PC-9 (cell line): ENCODE measurements at regions of chr14 and their contacts with region 1.

Region 1: DNA sequence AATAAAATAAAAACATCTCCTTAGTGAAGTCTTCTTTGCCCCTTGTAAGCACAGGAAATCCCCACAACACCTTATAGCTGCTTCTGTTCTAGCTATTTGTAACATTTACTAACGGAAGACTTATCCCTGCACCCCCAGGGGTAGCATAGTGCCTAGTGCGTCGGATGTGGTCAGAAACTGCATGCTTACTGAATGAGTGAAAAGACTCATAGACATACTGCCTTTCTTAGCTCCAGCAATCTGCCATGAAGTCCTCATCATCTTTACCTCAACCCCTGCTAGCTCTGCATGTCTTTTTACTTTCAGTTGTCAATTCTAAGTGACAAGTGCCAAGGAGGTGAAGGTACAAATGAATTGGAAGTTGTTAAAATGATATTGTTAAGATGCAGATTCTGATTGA is 12.9 kb downstream of the RIOX1 start:
- DNase-seq: no peak
- H3K4me3 ChIP-seq: no peak overlapping the region
- H3K27ac ChIP-seq: no peak overlapping the region
- H3K4me1 ChIP-seq: no peaks in the 10 kb centered on the region
- H3K27me3 ChIP-seq: no peaks in the 10 kb centered on the region
- CTCF ChIP-seq: no peak

Region 2: GRCh38 chr14:73198253-73198652 is 305.4 kb before region 1 on chr14:
- CTCF ChIA-PET with region 1: interaction called, 11 read pairs
- POLR2A ChIA-PET with region 1: no interaction called
- intact Hi-C with region 1: no loop called
- DNase-seq: no peak
- H3K4me3 ChIP-seq: no peak overlapping the region
- H3K27ac ChIP-seq: no peak overlapping the region
- H3K4me1 ChIP-seq: no peaks in the 10 kb centered on the region
- H3K27me3 ChIP-seq: no peaks in the 10 kb centered on the region
- CTCF ChIP-seq: no peak